ENCODE measurements at regions of chr17 and their contacts with region 1.

Region 1: DNA sequence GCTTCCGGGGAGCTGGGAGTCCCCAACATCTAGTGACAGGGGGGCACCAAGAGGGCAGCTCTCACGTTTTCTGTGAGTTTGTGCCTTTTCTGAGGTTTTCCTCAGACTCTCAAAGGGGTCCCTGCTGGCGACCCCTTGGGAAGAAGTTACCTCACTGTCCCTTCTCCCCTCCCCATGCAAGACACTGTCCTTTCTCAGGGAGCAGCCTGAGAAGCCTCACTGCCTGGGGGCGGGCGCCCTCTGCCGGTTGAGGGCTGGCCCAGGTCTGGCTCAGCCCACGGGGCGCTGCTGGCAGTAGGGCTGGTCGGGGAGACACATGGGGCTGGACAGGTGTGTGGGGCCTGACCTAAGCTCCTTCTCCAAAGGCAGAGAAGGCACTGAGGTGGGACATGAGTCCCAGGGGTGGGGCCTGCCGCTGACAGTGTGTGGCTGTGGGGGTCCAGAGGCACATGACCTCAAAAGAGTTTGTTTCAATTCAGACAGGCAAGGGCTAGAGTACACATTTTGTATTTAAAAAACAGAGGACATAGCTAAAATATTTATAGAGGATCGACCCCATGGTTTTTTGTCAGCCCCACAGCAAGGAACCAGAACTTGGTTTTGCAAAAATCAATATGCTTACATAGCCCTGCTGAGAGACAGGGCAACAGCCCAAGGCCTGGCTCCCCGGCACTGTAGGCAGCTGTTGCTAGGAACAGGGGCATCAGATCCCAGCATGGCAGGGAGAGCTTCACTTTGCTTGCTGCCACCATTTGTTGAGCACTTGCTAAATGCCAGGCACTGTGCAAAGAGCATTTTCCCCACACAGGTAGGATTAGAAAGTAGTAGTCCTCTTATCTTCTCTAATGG is 18.5 kb upstream of the ALDH3A1 start:
- DNase-seq: peak; percentile 79
- ATAC-seq: peak; percentile 86
- H3K4me3 Mint-ChIP-seq: no peak overlapping the region
- H3K27ac Mint-ChIP-seq: no peak overlapping the region
- H3K4me1 Mint-ChIP-seq: peaks cover 14% of the 10 kb centered on the region
- H3K27me3 Mint-ChIP-seq: peaks cover 5% of the 10 kb centered on the region

Region 2: DNA sequence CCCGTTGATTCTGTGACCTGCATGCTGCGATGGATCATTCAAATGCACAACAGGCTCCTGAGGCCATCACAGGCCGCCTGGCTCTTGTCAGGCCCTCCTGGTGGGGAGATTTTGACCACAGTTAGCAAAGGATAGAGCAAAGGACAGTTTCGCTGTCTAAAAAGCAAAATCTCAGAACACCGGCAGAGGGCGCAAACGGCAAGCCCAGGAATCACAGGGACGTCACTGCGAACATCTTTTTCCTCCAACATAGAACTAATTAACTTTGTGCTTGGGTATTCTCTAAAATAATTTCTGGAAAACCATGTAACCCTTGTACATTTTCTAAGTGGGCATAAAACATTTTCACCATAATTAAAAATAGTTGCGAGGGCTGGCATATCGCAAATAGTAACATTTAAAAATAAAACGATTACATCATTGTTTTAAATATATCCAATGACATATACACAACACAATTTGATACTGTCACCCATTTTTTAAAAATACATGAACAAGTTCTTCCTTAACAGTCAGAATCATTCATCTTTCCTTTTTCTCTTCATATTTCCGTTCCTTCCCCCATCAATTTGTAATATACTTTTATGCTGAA is 252.7 kb before region 1 on chr17:
- CTCF ChIA-PET with region 1: interaction called, 19 read pairs
- DNase-seq: peak; percentile 73
- ATAC-seq: peak; percentile 61
- H3K4me3 Mint-ChIP-seq: no peak overlapping the region
- H3K27ac Mint-ChIP-seq: no peak overlapping the region
- H3K4me1 Mint-ChIP-seq: peaks cover 2% of the 10 kb centered on the region
- H3K27me3 Mint-ChIP-seq: no peaks in the 10 kb centered on the region

Region 3: DNA sequence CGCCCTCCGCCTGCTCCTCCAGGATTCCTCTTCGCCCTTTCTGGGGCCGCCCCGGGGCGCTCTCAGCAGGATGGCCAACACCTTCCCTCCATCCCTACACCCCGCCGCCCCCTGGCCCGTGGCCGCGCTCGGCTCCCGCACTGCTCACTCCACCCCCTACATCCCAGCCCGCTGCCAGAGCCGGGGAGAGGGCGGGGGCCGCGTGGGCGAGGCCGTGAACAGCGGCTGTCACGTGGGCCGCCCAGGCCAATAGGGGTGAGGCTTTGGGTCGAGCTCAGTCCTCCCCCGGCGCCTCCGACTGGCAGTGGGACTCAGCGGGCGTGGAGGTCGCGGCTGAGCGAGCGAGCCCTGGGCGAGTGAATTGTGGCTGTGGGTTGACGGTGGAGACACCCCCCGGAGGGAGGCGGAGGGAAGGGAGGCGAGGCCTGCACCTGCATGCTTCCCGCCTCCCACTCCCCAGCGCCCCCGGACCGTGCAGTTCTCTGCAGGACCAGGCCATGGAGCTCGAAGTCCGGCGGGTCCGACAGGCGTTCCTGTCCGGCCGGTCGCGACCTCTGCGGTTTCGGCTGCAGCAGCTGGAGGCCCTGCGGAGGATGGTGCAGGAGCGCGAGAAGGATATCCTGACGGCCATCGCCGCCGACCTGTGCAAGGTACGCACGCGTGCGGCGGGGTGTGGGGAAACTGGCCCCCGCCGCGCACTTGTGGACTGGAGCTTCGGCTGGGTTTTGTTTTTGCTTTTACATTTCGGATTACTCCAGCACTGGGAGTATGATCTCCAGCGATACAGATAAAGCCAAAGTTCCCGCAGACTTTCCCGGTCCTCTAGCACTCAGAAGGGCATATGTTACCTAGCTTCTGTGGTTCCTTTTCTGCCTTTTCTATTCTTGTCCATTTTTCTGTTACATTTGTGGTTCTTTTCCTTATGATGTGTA is 117.9 kb before region 1 on chr17 and contains the start of gene ALDH3A2:
- CTCF ChIA-PET with region 1: interaction called, 25 read pairs
- DNase-seq: peak; percentile 96
- ATAC-seq: peak; percentile 97
- H3K4me3 Mint-ChIP-seq: peak within 1 kb of the TSS; percentile 90
- H3K27ac Mint-ChIP-seq: peak within 1 kb of the TSS; percentile 95
- H3K4me1 Mint-ChIP-seq: peaks cover 41% of the 10 kb centered on the region
- H3K27me3 Mint-ChIP-seq: peaks cover 12% of the 10 kb centered on the region
- total RNA-seq, gene ALDH3A2: 29.9 to 30.5 TPM

Region 4: DNA sequence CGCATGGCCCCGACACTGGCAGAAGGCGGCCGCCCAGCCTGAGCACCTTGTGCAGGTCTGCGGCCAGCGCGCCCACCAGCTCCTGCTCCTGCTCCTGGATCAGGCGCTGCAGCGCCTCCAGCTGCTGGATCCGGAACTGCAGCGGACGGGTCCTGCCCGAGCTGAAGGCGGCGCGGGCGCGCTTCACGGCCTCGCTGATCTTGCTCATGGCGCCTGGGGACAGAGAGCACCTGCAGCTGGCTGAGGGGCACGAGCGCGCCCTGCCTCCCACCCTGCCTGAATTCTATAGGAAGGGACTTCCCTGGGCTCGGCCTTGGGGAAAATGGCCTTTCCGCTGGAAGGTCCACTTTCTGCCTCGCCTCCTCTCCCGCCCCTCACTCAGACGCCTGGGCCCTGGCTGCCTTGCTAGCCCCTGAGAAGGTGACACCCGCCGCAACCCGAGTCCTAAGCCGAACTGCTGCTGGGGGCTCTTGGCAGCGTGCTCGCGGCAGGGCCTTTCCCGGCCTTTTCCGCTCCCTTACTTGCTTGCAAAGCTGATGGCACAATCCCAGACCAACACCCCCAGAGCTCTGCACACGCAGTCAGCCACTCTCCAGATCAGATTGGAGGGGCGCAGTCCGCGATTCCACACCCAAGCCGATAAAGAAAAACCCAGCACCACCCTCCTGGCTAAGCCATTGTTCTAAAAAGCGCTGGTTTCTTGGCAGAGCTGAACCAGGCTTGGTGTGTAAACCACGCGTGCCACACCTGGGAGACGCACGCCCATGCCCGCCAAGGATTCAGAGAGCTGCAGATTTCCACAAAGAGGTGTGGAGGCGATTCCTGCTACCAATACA is 21.5 kb before region 1 on chr17:
- CTCF ChIA-PET with region 1: interaction called, 18 read pairs
- DNase-seq: peak; percentile 89
- ATAC-seq: peak; percentile 91
- H3K4me3 Mint-ChIP-seq: peak overlapping the region; percentile 66
- H3K27ac Mint-ChIP-seq: no peak overlapping the region
- H3K4me1 Mint-ChIP-seq: peaks cover under 1% of the 10 kb centered on the region
- H3K27me3 Mint-ChIP-seq: peaks cover 9% of the 10 kb centered on the region

Region 5: GRCh38 chr17:19753049-19753444 is 13.6 kb before region 1 on chr17:
- CTCF ChIA-PET with region 1: interaction called, 11 read pairs
- DNase-seq: no peak
- ATAC-seq: no peak
- H3K4me3 Mint-ChIP-seq: no peak overlapping the region
- H3K27ac Mint-ChIP-seq: no peak overlapping the region
- H3K4me1 Mint-ChIP-seq: peaks cover 4% of the 10 kb centered on the region
- H3K27me3 Mint-ChIP-seq: peaks cover 38% of the 10 kb centered on the region

Region 6: GRCh38 chr17:19876529-19877161 is 110.0 kb after region 1 on chr17:
- CTCF ChIA-PET with region 1: no interaction called
- DNase-seq: peak; percentile 76
- ATAC-seq: peak; percentile 86
- H3K4me3 Mint-ChIP-seq: no peak overlapping the region
- H3K27ac Mint-ChIP-seq: peak overlapping the region; percentile 75
- H3K4me1 Mint-ChIP-seq: peaks cover 20% of the 10 kb centered on the region
- H3K27me3 Mint-ChIP-seq: peaks cover 2% of the 10 kb centered on the region